Left cardiac atrium (tissue), 4 donors: ENCODE measurements at regions of chr4 and their contacts with region 1.

Region 1: DNA sequence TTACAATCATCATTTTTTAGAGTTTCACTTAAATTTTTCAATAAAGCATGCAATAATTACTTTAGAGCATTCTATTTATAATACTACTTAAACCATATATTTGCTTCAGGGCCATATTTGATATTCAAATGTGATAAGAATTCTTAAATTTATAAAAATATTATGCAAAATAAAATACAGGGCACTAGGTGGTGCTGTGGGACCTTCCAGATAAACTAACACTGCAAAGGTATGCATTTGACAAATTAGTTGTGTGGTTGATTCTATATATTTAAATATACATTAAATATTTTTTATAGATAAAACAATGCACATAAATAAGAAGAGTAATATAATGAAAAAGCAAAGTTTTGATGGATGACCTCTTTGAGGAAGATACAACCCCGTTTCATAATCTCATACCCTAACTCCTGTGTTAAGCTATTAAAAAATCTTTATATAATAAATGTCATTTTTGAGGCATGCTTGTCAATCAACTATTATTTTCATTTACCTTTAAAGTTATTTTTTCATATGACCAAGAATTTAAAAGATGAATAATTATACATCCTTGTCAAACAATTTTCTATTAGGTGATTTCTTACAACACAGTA is 128.4 kb downstream of the REELD1 start:
- DNase-seq: no peak
- ATAC-seq: no peak

Region 2: GRCh38 chr4:146522098-146522868 is 179.6 kb after region 1 on chr4:
- intact Hi-C with region 1: loop called in 1 of 2 experiments (anchors 10 kb)
- DNase-seq: peak; percentile 96
- ATAC-seq: peak; percentile 97 to 99

Region 3: DNA sequence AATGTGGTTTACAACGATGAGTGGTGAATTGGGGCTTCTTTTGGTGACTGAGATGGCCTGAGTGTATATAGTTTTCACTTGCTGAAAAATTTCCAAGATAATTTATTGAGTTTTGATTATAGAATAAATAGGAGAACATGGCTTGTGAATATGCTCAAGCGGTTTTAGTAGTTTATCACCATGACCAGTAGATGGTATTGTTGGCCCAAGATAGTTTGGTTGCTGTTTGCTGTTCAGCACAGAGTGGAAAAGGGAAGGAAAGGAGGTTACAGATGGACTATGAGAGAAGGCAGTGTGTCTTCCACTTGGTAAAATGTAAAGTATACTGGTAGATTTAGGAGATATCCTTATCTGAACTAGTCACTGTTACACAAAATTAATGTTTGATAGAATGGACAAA is 240.2 kb after region 1 on chr4:
- intact Hi-C with region 1: no loop called
- DNase-seq: no peak
- ATAC-seq: no peak

Region 4: GRCh38 chr4:146916479-146917076 is 573.9 kb after region 1 on chr4:
- intact Hi-C with region 1: loop called (anchors 2 to 10 kb)
- DNase-seq: no peak
- ATAC-seq: no peak